ENCODE measurements at regions of chr3 and their contacts with region 1.

Region 1: DNA sequence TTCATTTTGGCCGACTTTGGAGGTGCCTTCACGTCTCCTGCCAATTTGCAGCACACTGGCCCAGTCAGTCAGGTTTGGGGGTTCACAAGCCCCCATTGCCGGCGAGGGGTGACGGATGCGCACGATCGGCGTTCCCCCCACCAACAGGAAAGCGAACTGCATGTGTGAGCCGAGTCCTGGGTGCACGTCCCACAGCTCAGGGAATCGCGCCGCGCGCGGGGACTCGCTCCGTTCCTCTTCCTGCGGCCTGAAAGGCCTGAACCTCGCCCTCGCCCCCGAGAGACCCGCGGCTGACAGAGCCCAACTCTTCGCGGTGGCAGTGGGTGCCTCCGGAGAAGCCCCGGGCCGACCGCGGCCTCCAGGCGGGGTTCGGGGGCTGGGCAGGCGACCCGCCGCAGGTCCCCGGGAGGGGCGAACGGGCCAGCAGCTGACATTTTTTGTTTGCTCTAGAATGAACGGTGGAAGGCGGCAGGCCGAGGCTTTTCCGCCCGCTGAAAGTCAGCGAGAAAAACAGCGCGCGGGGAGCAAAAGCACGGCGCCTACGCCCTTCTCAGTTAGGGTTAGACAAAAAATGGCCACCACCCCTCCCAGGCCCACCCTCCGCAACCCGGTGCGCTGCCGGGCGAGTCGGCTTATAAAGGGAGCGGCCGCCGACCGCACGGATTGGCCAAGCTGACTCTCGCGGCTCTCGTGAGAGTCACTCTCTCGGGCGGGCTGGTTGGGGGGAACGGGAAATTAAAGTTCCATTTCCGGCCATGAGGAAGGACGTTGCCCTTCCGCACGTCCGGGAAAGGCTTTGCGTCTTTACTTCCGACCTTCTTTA is at the start of gene TERC:
- DNase-seq: peak; percentile 66
- ATAC-seq: peak; percentile 92
- H3K4me3 ChIP-seq: peak within 1 kb of the TSS; percentile 68
- H3K27ac ChIP-seq: peak within 1 kb of the TSS; percentile 71
- H3K4me1 ChIP-seq: no peaks in the 10 kb centered on the region
- H3K27me3 ChIP-seq: no peaks in the 10 kb centered on the region
- CTCF ChIP-seq: no peak
- EP300 ChIP-seq: no peak
- POLR2A ChIP-seq: peak; percentile 82
- RAD21 ChIP-seq: no peak
- polyA plus RNA-seq, gene TERC: not detected

Region 2: GRCh38 chr3:169387751-169388696 is 376.6 kb before region 1 on chr3:
- CTCF ChIA-PET with region 1: no interaction called
- POLR2A ChIA-PET with region 1: no interaction called
- RAD21 ChIA-PET with region 1: no interaction called
- SMC1A ChIA-PET with region 1: no interaction called
- in situ Hi-C with region 1: no loop called
- intact Hi-C with region 1: no loop called
- DNase-seq: no peak
- ATAC-seq: no peak
- H3K4me3 ChIP-seq: no peak overlapping the region
- H3K27ac ChIP-seq: no peak overlapping the region
- H3K4me1 ChIP-seq: peaks cover 3% of the 10 kb centered on the region; the same call in 1 of the 2 replicates
- H3K27me3 ChIP-seq: 0 out of 4 replicates have a peak, but pooled peaks cover 0 to 4% of the 10 kb centered on the region in 2 experiments
- CTCF ChIP-seq: no peak
- EP300 ChIP-seq: no peak
- POLR2A ChIP-seq: no peak
- RAD21 ChIP-seq: no peak

Region 3: DNA sequence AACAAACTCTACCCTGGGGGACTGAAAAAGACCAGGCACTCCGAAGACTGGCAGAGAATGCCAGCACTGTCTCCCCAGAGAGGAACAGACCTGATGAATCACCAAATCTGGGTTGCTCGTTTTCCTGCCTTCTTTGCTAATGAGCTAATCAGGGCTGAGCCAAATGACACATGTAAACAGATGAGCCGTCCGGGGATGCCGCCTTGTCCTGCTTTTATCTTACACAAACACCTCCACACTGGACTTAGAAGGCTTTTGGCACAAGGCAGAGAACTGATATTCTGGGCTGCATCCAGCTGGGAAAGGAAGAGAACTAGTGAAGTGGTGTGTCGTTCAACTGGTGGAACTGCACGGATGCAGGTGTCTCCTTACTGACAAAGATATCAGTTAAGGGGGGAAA is 189.3 kb before region 1 on chr3:
- CTCF ChIA-PET with region 1: no interaction called
- POLR2A ChIA-PET with region 1: no interaction called
- RAD21 ChIA-PET with region 1: no interaction called
- SMC1A ChIA-PET with region 1: no interaction called
- in situ Hi-C with region 1: no loop called
- intact Hi-C with region 1: no loop called
- DNase-seq: no peak
- ATAC-seq: no peak
- H3K4me3 ChIP-seq: no peak overlapping the region
- H3K27ac ChIP-seq: no peak overlapping the region
- H3K4me1 ChIP-seq: no peaks in the 10 kb centered on the region
- H3K27me3 ChIP-seq: no peaks in the 10 kb centered on the region; a peak in 1 of 4 replicates
- CTCF ChIP-seq: no peak
- EP300 ChIP-seq: no peak
- POLR2A ChIP-seq: no peak
- RAD21 ChIP-seq: no peak

Region 4: GRCh38 chr3:169863458-169863899 is 98.8 kb after region 1 on chr3:
- CTCF ChIA-PET with region 1: interaction called, 10 read pairs
- POLR2A ChIA-PET with region 1: no interaction called
- RAD21 ChIA-PET with region 1: interaction called, 4 read pairs
- SMC1A ChIA-PET with region 1: interaction called, 10 read pairs
- in situ Hi-C with region 1: no loop called
- intact Hi-C with region 1: loop called (anchors 2 kb)
- DNase-seq: peak; percentile 61
- ATAC-seq: peak; percentile 81
- H3K4me3 ChIP-seq: no peak overlapping the region
- H3K27ac ChIP-seq: no peak overlapping the region
- H3K4me1 ChIP-seq: peaks cover 16% of the 10 kb centered on the region
- H3K27me3 ChIP-seq: no peaks in the 10 kb centered on the region; a peak in 1 of 4 replicates
- CTCF ChIP-seq: peak; percentile 93 to 96 (median 93); a peak in 5 of 6 replicates
- EP300 ChIP-seq: no peak
- POLR2A ChIP-seq: no peak
- RAD21 ChIP-seq: peak; percentile 99

Region 5: DNA sequence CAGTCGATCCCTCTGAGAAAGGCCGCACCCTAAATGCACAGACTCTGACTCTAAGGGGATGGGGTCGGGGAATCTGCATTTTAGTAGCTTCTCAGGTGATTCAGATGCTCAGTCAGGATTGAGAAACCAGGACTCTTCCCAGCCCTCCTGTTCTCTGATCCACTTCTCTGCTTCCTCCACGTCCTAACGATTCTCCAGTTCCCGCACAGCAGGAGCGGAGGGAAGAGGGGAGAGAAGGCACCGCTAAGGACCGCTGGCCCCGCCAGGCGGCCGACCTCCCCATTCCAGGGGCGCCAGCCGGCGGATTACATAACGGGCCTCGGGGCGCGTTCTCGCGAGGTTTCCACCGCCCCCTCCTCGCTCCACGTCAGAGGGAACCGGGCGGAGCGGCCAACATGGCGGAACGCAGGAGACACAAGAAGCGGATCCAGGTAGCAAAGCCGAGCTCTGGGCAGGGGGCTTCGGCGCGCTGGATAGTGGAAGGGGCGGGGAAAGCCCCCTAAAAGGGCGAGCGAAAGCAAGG is 201.8 kb after region 1 on chr3 and contains the start of gene SEC62:
- CTCF ChIA-PET with region 1: interaction called, 5 read pairs
- POLR2A ChIA-PET with region 1: interaction called, 5 read pairs
- RAD21 ChIA-PET with region 1: interaction called, 3 read pairs
- SMC1A ChIA-PET with region 1: interaction called, 3 read pairs
- in situ Hi-C with region 1: no loop called
- intact Hi-C with region 1: loop called (anchors 5 kb)
- DNase-seq: peak; percentile 65
- ATAC-seq: peak; percentile 89
- H3K4me3 ChIP-seq: peak within 1 kb of the TSS; percentile 79
- H3K27ac ChIP-seq: peak within 1 kb of the TSS; percentile 91
- H3K4me1 ChIP-seq: peaks cover 7% of the 10 kb centered on the region; the same call in 1 of the 2 replicates
- H3K27me3 ChIP-seq: no peaks in the 10 kb centered on the region
- CTCF ChIP-seq: peak; percentile 57 to 75 (median 64)
- EP300 ChIP-seq: no peak; a peak in 1 of 4 replicates
- POLR2A ChIP-seq: peak; percentile 95
- RAD21 ChIP-seq: peak; percentile 74
- polyA plus RNA-seq, gene SEC62: 252 to 270 TPM

Region 6: DNA sequence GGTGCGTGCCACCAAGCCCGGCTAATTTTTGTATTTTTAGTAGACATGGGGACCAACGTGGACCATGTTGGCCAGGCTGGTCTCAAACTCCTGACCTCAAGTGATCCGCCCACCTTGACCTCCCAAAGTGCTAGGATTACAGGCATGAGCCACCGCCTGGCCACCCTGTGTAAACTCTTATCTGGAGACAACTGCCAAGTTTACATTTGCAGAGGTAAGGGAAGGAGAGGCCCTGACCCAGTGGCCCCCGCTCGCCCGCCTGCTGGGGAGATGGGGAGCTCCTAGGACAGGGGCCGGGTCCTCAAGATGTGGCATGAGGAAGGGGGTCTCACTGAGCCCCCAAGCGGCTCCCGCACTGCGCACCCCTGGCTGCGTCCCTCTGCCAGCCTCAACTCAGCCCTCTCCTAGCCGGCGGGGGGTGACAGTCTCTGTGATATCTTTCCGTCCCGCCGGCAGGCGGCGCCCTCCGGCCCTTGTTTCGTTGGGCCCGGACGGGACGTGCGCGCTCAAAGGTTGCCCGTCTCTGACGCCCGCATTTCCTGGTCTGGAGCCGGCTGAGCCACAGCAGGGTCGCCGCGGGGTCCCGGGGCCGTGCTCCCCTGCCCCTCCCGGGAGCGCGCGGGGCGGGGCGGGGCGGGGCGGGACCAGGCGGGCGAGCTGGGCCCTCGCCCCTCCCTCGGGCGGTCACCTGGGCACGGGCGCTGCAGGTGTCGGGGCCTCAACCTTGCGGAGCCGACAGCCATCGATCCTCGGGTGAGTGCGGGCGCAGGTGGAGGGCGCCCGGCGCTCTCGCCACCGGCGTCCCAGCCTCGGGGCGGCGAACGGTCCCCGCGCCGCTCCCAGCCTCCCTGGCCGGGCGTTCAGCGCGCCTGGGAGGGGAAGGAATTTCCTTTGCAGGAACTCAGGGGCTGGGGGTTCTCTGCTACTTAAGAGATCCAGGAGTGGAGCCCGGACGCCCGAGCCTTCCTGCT is 273.1 kb after region 1 on chr3 and contains the start of gene GPR160:
- CTCF ChIA-PET with region 1: interaction called, 6 read pairs
- POLR2A ChIA-PET with region 1: no interaction called
- RAD21 ChIA-PET with region 1: no interaction called
- SMC1A ChIA-PET with region 1: no interaction called
- in situ Hi-C with region 1: no loop called
- intact Hi-C with region 1: loop called (anchors 5 kb)
- DNase-seq: no peak
- ATAC-seq: peak; percentile 93
- H3K4me3 ChIP-seq: peak within 1 kb of the TSS; percentile 87
- H3K27ac ChIP-seq: peak within 1 kb of the TSS; percentile 88
- H3K4me1 ChIP-seq: peaks cover 11% of the 10 kb centered on the region; the same call in 1 of the 2 replicates
- H3K27me3 ChIP-seq: no peaks in the 10 kb centered on the region; a peak in 2 of 4 replicates
- CTCF ChIP-seq: peak; percentile 83 to 91 (median 84)
- EP300 ChIP-seq: no peak
- POLR2A ChIP-seq: peak; percentile 79
- RAD21 ChIP-seq: peak; percentile 81
- polyA plus RNA-seq, gene GPR160: 8.8 to 14.4 TPM

Region 7: DNA sequence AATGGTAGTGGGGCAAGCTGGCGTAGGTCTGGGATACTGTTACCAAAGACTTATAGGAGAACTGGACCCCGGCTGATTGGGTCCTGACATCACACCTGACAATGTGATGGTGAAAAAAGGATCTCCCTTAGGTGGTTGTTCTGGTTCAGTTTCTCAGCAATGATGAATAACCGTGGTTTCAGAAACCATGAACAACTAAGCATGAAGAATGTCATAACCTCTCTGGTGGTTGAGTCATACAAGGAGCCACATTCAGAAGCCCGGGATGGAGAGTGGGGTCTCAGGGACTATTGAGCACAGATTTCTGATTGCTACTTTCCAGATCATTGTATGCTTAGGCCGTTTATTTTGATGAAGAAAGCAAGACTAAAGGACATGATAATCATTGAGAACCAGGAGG is 290.5 kb after region 1 on chr3:
- CTCF ChIA-PET with region 1: interaction called, 27 read pairs
- POLR2A ChIA-PET with region 1: no interaction called
- RAD21 ChIA-PET with region 1: interaction called, 4 read pairs
- SMC1A ChIA-PET with region 1: interaction called, 7 read pairs
- in situ Hi-C with region 1: no loop called
- intact Hi-C with region 1: loop called (anchors 5 kb)
- DNase-seq: peak; percentile 63
- ATAC-seq: peak; percentile 73
- H3K4me3 ChIP-seq: peak overlapping the region; percentile 59
- H3K27ac ChIP-seq: peak overlapping the region; percentile 94
- H3K4me1 ChIP-seq: peaks cover 42% of the 10 kb centered on the region
- H3K27me3 ChIP-seq: no peaks in the 10 kb centered on the region
- CTCF ChIP-seq: 0 out of 6 replicates have a peak, but pooled peaks of 1 of the 3 experiments have one; percentile 2
- EP300 ChIP-seq: peak; percentile 35 to 36; a peak in 1 of 4 replicates
- POLR2A ChIP-seq: peak; percentile 24; the same call in 1 of the 2 replicates
- RAD21 ChIP-seq: no peak

Region 8: GRCh38 chr3:170180908-170181879 is 416.5 kb after region 1 on chr3 and contains the start of gene PHC3:
- CTCF ChIA-PET with region 1: no interaction called
- POLR2A ChIA-PET with region 1: no interaction called
- RAD21 ChIA-PET with region 1: no interaction called
- SMC1A ChIA-PET with region 1: no interaction called
- in situ Hi-C with region 1: no loop called
- intact Hi-C with region 1: loop called (anchors 5 kb)
- DNase-seq: peak; percentile 73
- ATAC-seq: peak; percentile 80
- H3K4me3 ChIP-seq: peak within 1 kb of the TSS; percentile 89
- H3K27ac ChIP-seq: peak within 1 kb of the TSS; percentile 98
- H3K4me1 ChIP-seq: peaks cover 3% of the 10 kb centered on the region
- H3K27me3 ChIP-seq: no peaks in the 10 kb centered on the region
- CTCF ChIP-seq: 0 out of 6 replicates have a peak, but pooled peaks of 1 of the 3 experiments have one; percentile 17
- EP300 ChIP-seq: no peak
- POLR2A ChIP-seq: peak; percentile 79
- RAD21 ChIP-seq: no peak
- polyA plus RNA-seq, gene PHC3: 3.3 to 5.8 TPM

Measured in GM12878 (cell line).